ENCODE measurements at regions of chr12 and their contacts with region 1.

Region 1: GRCh38 chr12:38342444-38342843 is 25.9 kb downstream of the ALG10B start:
- DNase-seq: no peak
- ATAC-seq: no peak
- H3K4me3 ChIP-seq: no peak overlapping the region
- H3K4me3 Mint-ChIP-seq: no peak overlapping the region
- H3K27ac ChIP-seq: no peak overlapping the region
- H3K27ac Mint-ChIP-seq: no peak overlapping the region
- H3K4me1 ChIP-seq: no peaks in the 10 kb centered on the region
- H3K4me1 Mint-ChIP-seq: no peaks in the 10 kb centered on the region
- H3K27me3 ChIP-seq: peaks cover 0 to 4% of the 10 kb centered on the region in 2 experiments
- H3K27me3 Mint-ChIP-seq: peaks cover 3% of the 10 kb centered on the region
- CTCF ChIP-seq: no peak

Region 2: DNA sequence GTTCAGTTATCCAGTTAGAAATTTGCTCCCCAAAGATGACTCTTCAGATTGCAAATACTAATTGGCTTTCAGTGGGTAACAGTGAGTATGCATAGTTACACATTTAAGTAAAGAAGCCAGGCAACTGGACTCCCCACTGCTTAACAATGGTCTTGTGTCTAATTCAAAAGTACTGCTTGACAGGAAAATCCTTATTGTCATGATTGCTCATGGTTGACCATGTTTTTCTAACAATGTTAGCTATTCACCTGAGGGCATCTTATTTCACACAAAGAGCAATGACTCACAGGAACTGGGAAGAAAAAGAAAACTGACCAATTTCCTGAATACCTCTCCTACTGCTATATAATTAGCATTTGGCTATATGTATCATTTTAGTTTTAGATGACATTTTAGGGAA is 59.6 kb before region 1 on chr12:
- CTCF ChIA-PET with region 1: no interaction called
- POLR2A ChIA-PET with region 1: no interaction called
- intact Hi-C with region 1: loop called in 1 of 2 experiments (anchors 10 kb)
- DNase-seq: no peak
- ATAC-seq: no peak
- H3K4me3 ChIP-seq: no peak overlapping the region
- H3K4me3 Mint-ChIP-seq: no peak overlapping the region
- H3K27ac ChIP-seq: no peak overlapping the region
- H3K27ac Mint-ChIP-seq: no peak overlapping the region
- H3K4me1 ChIP-seq: no peaks in the 10 kb centered on the region
- H3K4me1 Mint-ChIP-seq: no peaks in the 10 kb centered on the region
- H3K27me3 ChIP-seq: no peaks in the 10 kb centered on the region
- H3K27me3 Mint-ChIP-seq: peaks cover 4% of the 10 kb centered on the region
- CTCF ChIP-seq: no peak

Region 3: DNA sequence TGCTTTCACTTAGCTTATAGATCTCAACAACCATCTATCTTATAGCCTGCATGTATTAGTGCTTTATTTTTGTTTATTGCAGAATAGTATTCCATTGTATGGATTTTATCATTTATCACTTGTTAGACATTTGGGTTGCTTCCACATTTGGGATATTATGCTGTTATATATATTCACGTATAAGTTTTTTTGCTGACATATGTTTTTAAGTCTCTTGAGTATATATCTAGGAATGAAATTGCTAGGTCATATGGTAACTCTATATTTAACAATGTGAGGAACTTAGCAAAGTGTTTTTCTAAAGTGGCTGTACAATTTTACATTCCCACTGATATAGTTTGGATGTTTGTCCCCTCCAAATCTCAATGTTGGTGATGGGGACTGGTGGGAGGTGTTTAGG is 354.8 kb after region 1 on chr12:
- CTCF ChIA-PET with region 1: no interaction called
- POLR2A ChIA-PET with region 1: no interaction called
- intact Hi-C with region 1: no loop called
- DNase-seq: no peak
- ATAC-seq: no peak
- H3K4me3 ChIP-seq: no peak overlapping the region
- H3K4me3 Mint-ChIP-seq: no peak overlapping the region
- H3K27ac ChIP-seq: no peak overlapping the region
- H3K27ac Mint-ChIP-seq: no peak overlapping the region
- H3K4me1 ChIP-seq: no peaks in the 10 kb centered on the region
- H3K4me1 Mint-ChIP-seq: no peaks in the 10 kb centered on the region
- H3K27me3 ChIP-seq: no peaks in the 10 kb centered on the region
- H3K27me3 Mint-ChIP-seq: no peaks in the 10 kb centered on the region
- CTCF ChIP-seq: no peak

Measured in CD4-positive, alpha-beta T cell (primary cell).